Dendritic cell treated with granulocyte-macrophage colony-stimulating factor and Interleukin-4, amounts not matched to agents 40 ng/mL and 50 ng/mL, for 4 days (primary cell): ENCODE measurements at regions of chr15 and their contacts with region 1.

Region 1: GRCh38 chr15:89888214-89888804 is 5.5 kb downstream of the AP3S2 start:
- H3K4me3 Mint-ChIP-seq: no peak overlapping the region
- H3K27ac Mint-ChIP-seq: no peak overlapping the region
- H3K4me1 Mint-ChIP-seq: peaks cover 26% of the 10 kb centered on the region
- H3K27me3 Mint-ChIP-seq: no peaks in the 10 kb centered on the region

Region 2: DNA sequence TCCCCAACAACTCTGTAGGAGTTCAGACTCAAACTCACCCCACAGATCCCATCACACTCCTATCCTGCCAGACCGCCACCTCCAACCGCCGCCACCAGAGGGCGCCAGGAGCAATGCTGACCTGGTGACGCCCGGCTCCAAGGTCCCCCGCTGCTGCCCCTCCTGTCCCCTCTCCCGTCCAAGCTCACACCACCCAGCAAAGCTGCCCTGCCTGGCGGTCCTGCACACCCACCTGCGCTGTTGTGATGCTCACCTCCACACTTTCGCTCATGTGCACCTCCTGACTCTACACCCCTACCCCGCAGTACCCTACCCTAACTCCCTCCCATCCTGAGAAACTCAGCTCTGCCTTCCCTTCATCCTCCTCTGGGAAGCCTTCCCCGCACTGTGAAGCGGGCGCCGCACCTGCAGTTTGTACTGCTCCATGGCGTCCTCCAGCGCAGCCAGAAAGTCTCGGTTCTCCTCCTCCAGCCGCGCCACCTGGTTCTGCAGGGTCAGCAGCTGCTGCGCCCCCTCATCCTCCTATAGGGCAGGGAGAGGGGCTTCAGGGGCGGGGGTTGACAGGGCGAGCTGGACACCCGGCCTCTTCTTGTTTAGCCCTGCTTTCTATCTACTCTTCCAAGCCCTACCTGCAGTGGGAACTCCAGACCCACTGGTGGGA is 241.0 kb before region 1 on chr15:
- intact Hi-C with region 1: loop called (anchors 5 kb)
- H3K4me3 Mint-ChIP-seq: peak overlapping the region; percentile 41
- H3K27ac Mint-ChIP-seq: peak overlapping the region; percentile 37
- H3K4me1 Mint-ChIP-seq: peaks cover 5% of the 10 kb centered on the region
- H3K27me3 Mint-ChIP-seq: peaks cover 11% of the 10 kb centered on the region

Region 3: DNA sequence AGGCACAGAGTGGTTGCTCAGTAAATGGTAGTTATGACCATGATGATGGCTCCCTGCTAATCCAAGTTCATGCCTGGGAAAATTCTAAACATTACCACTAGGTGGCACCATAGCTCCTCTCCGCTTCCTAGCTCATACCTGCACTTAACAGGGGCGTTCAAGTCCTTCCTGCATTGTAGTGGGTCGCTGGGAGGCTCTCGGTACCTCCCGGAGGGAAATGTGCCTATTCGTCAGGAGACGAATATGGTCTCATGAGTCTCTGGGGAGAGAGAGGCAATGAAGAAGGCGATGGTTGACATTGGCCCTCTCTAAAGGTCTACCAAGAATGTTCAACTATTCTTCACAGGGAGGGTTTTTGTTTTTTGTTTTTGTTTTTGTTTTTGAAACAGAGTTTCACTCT is 148.2 kb before region 1 on chr15:
- intact Hi-C with region 1: loop called (anchors 1 kb)
- H3K4me3 Mint-ChIP-seq: no peak overlapping the region
- H3K27ac Mint-ChIP-seq: no peak overlapping the region
- H3K4me1 Mint-ChIP-seq: no peaks in the 10 kb centered on the region
- H3K27me3 Mint-ChIP-seq: peaks cover 13% of the 10 kb centered on the region

Region 4: GRCh38 chr15:89760303-89761008 is 127.9 kb before region 1 on chr15:
- intact Hi-C with region 1: loop called (anchors 1 kb)
- H3K4me3 Mint-ChIP-seq: peak overlapping the region; percentile 48
- H3K27ac Mint-ChIP-seq: peak overlapping the region; percentile 87
- H3K4me1 Mint-ChIP-seq: peaks cover 31% of the 10 kb centered on the region
- H3K27me3 Mint-ChIP-seq: peaks cover 8% of the 10 kb centered on the region

Region 5: GRCh38 chr15:90062023-90062442 is 173.7 kb after region 1 on chr15:
- intact Hi-C with region 1: no loop called
- H3K4me3 Mint-ChIP-seq: no peak overlapping the region
- H3K27ac Mint-ChIP-seq: peak overlapping the region; percentile 93
- H3K4me1 Mint-ChIP-seq: peaks cover 91% of the 10 kb centered on the region
- H3K27me3 Mint-ChIP-seq: no peaks in the 10 kb centered on the region